Activated T-helper 1 cell treated with anti-CD3 and anti-CD28 coated beads, Interleukin-12 subunit alpha, Interleukin-12 subunit beta, Interleukin-2, Interleukin-4 antibody, amounts not matched to agents 30 ng/mL and 10 ng/mL and 1 ng/mL, durations not matched to agents 14 hours and 24 hours and 36 hours (primary cell): ENCODE measurements at regions of chr6 and their contacts with region 1.

Region 1: GRCh38 chr6:90088009-90088408 is 193.7 kb downstream of the GJA10 start:
- DNase-seq: no peak
- H3K4me3 Mint-ChIP-seq: no peak overlapping the region
- H3K27ac Mint-ChIP-seq: peak overlapping the region; percentile 61
- H3K4me1 Mint-ChIP-seq: peaks cover 53% of the 10 kb centered on the region
- H3K27me3 Mint-ChIP-seq: no peaks in the 10 kb centered on the region

Region 2: DNA sequence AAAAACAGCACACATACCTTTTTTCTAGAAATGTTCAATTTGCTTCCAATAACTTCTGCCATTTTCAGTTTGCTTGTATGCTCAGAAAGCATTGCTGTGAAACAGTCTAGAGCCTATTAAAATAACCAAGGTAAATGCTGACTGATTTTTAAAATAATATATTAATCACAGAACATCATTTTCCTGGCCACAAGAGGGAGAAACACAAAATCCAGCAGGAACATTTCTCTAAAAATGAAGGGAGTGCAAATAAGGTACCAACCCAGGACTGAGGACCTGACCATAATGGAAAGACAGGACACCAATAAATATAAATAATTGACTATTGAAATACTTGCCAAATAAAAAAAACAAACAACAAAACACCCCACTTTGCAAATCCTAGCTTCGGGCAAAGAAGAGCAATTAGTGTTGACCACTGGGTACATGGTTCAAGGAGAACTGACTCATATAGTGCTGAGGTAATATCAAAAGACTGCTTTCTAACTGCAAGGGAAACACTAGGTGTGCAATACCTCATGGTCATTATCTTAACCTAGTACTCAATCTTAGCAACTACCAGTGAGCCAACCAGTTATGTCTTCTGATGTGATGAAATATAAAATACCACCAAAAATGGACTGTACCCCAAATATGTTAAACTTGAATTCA is 311.3 kb before region 1 on chr6:
- intact Hi-C with region 1: no loop called
- DNase-seq: no peak
- H3K4me3 Mint-ChIP-seq: no peak overlapping the region
- H3K27ac Mint-ChIP-seq: no peak overlapping the region
- H3K4me1 Mint-ChIP-seq: no peaks in the 10 kb centered on the region
- H3K27me3 Mint-ChIP-seq: no peaks in the 10 kb centered on the region

Region 3: GRCh38 chr6:90098001-90098531 is 10.1 kb after region 1 on chr6:
- intact Hi-C with region 1: loop called (anchors 1 kb)
- DNase-seq: no peak
- H3K4me3 Mint-ChIP-seq: no peak overlapping the region
- H3K27ac Mint-ChIP-seq: no peak overlapping the region
- H3K4me1 Mint-ChIP-seq: peaks cover 65% of the 10 kb centered on the region
- H3K27me3 Mint-ChIP-seq: peaks cover 2% of the 10 kb centered on the region